ENCODE measurements at regions of chr11 and their contacts with region 1.

Region 1: GRCh38 chr11:109939166-109939810 is 153.9 kb upstream of the ZC3H12C start:
- DNase-seq: no peak
- H3K4me3 Mint-ChIP-seq: no peak overlapping the region
- H3K27ac Mint-ChIP-seq: no peak overlapping the region
- H3K4me1 Mint-ChIP-seq: no peaks in the 10 kb centered on the region
- H3K27me3 Mint-ChIP-seq: peaks cover 8% of the 10 kb centered on the region

Region 2: DNA sequence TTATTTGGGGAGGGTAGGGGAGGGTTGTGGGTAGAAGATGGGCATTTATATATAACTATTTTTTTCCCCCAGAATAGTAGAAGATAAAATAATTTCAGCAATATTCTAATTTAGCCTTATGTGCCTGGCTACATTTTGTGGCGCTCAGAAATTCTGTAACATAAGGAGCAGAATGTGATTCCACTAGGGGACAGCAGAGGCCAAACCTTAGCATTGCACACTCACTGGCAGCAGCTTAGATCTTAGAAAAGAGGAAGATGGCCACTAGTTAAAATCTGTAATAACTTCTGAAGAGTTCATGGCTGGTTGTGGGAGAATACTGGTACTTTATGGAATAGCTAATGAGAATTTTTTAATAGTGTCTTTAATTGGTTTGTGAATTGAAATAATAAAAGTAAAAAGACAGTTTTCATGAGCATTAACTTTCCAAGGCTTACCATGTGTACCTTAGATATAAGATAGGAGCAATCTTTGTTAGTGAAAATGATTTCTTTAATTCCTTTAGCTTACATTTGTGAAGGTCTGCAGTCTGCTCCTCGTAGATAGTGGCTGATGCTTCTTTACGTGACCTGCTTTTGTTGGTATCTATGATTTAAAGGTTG is 1241.3 kb before region 1 on chr11:
- CTCF ChIA-PET with region 1: no interaction called
- intact Hi-C with region 1: loop called (anchors 5 kb)
- DNase-seq: peak; percentile 67
- H3K4me3 Mint-ChIP-seq: no peak overlapping the region
- H3K27ac Mint-ChIP-seq: no peak overlapping the region
- H3K4me1 Mint-ChIP-seq: no peaks in the 10 kb centered on the region
- H3K27me3 Mint-ChIP-seq: no peaks in the 10 kb centered on the region

Region 3: GRCh38 chr11:109853156-109853776 is 86.0 kb before region 1 on chr11:
- CTCF ChIA-PET with region 1: interaction called, 5 read pairs
- intact Hi-C with region 1: loop called (anchors 1 kb)
- DNase-seq: peak; percentile 9
- H3K4me3 Mint-ChIP-seq: no peak overlapping the region
- H3K27ac Mint-ChIP-seq: no peak overlapping the region
- H3K4me1 Mint-ChIP-seq: no peaks in the 10 kb centered on the region
- H3K27me3 Mint-ChIP-seq: no peaks in the 10 kb centered on the region